ENCODE measurements at regions of chr15 and their contacts with region 1.

Region 1: DNA sequence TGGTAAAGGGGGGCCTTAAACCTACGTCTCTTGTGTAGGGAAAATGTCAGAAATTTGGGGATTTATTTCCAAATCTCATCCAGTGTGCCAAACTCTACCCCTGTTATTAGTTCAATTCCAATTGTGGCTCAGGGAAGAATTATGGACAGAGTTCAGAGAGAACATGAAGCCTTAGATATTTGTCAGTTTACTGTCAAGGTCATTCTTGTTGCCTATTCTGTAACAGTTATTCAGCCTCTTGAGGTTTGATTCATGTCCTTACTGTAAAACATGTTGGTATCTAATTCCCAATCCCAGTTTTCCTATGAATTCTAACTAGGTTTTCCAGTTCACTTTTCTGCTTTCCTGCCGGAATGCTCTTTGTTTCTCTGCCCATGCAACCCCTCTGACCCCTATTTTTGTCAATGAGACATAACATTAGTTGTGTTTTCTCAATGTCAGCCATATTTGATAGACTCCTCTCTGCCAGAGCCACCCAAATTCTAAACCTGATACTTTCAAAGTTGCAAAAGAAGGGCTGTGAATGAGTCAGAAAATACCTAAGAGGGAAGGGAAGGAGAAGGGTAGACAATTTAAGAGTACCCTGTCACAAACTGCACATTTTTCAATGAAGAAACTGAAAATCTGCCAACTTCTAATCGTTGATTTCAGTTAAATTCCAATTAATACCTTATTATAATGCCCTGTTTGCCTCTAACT is 52.4 kb downstream of the ATOSA start:
- DNase-seq: no peak
- ATAC-seq: no peak
- H3K4me3 ChIP-seq: no peak overlapping the region
- H3K27ac ChIP-seq: no peak overlapping the region
- H3K4me1 ChIP-seq: peaks cover 0 to 24% (median 0%) of the 10 kb centered on the region in 9 donors
- H3K27me3 ChIP-seq: no peaks in the 10 kb centered on the region
- CTCF ChIP-seq: no peak

Region 2: GRCh38 chr15:52673312-52673711 is 46.5 kb after region 1 on chr15:
- intact Hi-C with region 1: loop called in 2 of 10 experiments (anchors 5 to 10 kb)
- DNase-seq: no peak
- ATAC-seq: no peak
- H3K4me3 ChIP-seq: no peak overlapping the region
- H3K27ac ChIP-seq: no peak overlapping the region
- H3K4me1 ChIP-seq: peaks cover 0 to 69% (median 57%) of the 10 kb centered on the region in 9 donors
- H3K27me3 ChIP-seq: no peaks in the 10 kb centered on the region
- CTCF ChIP-seq: no peak

Region 3: GRCh38 chr15:52679232-52680040 is 52.6 kb after region 1 on chr15 and contains the start of gene ATOSA:
- intact Hi-C with region 1: loop called in 2 of 10 experiments (anchors 5 to 10 kb)
- DNase-seq: peak; percentile 90 to 94
- ATAC-seq: peak; percentile 93 to 97 (median 95)
- H3K4me3 ChIP-seq: peak within 1 kb of the TSS; percentile 74 to 95 (median 89)
- H3K27ac ChIP-seq: peak within 1 kb of the TSS; percentile 95 to 99 (median 97)
- H3K4me1 ChIP-seq: peaks cover 0 to 50% (median 44%) of the 10 kb centered on the region in 9 donors
- H3K27me3 ChIP-seq: no peaks in the 10 kb centered on the region
- CTCF ChIP-seq: peak in 4 of 9 donors; percentile 4 to 21 (median 12)
- total RNA-seq, gene ATOSA: 18.9 to 36.4 (median 30.3) TPM